ENCODE measurements at regions of chr3 and their contacts with region 1.

Region 1: GRCh38 chr3:29427266-29428103 is 146.6 kb downstream of the RBMS3 start:
- DNase-seq: no peak
- ATAC-seq: peak; percentile 64 to 84

Region 2: DNA sequence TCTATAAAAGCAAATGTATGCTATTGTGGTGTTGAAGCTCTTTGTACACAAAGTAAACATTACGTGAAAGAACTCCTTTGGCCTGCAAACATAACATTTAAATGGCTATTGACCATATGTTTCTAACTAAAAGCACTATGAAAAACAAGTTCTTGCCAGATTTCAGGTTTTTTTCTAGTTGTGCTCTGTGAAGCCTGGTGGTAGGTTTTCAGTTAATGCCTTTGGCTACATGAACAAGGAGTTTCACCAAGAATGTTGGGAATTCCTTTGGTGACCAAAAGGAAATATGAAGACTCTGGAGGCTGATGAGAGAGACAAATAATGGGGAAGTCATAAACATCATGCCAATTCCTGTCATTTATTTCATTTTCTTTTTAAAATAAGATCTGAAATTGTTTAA is 80.7 kb before region 1 on chr3:
- intact Hi-C with region 1: no loop called
- DNase-seq: no peak
- ATAC-seq: no peak

Region 3: DNA sequence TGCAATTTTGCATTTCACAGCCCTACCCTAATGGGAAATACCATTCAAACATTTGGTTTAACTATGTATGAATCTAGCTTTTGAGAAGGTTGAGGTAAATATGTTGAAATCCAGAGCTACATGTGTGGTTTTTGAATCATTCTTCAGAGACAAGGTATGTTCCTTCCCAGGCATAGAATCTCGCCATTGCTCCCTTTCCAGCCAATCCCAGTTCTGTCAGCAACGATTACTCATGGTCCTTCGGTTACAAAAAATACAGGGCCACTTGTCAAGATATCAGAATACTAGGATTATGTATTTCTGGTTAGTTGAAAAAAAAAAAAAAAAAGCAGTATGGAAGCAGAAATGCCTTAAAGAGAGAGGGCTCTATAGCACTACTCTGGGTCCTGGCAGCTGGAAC is 35.8 kb after region 1 on chr3:
- intact Hi-C with region 1: no loop called
- DNase-seq: no peak
- ATAC-seq: no peak

Region 4: GRCh38 chr3:29515451-29515850 is 88.0 kb after region 1 on chr3:
- intact Hi-C with region 1: loop called in 1 of 2 experiments (anchors 10 kb)
- DNase-seq: no peak
- ATAC-seq: peak in 1 of 2 donors; percentile 44

Measured in left cardiac atrium (tissue), 4 donors.